ENCODE measurements at regions of chr11 and their contacts with region 1.

Region 1: DNA sequence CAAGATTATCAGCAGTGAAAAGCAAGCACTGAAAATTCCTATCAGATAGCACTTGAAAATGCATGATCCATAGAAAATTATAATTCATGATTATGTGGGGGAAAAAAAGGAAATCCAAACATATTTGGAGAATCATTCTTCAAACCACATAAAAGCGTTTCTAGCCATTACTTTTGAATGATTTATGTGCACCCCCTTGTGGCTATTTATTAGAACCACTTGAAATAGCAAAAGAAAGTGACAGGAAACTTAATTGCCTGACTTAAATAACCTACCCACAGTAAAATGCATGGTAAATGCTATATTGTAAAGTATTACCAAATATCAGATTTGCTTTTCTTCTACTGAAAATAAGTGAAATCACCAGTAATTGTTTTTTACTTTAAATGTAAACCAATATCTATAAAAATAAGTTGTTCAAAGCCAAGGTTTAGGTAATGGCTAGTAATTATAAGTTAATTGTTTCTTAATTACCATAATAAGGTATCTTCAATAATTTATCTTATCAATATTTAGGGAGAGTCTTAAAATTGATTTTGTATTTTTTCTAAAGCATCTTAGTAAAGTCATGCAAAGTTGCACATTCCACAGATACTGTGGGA is 168.5 kb downstream of the ARHGAP42 start:
- DNase-seq: peak in 2 of 5 donors; percentile 78 to 81
- H3K4me3 ChIP-seq: no peak overlapping the region
- H3K27ac ChIP-seq: no peak overlapping the region
- H3K4me1 ChIP-seq: peaks cover 0 to 3% (median 0%) of the 10 kb centered on the region in 3 donors
- H3K27me3 ChIP-seq: no peaks in the 10 kb centered on the region
- CTCF ChIP-seq: peak; percentile 43

Region 2: GRCh38 chr11:100691891-100692689 is 163.5 kb before region 1 on chr11:
- intact Hi-C with region 1: loop called (anchors 5 kb)
- DNase-seq: no peak
- H3K4me3 ChIP-seq: no peak overlapping the region
- H3K27ac ChIP-seq: no peak overlapping the region
- H3K4me1 ChIP-seq: peaks cover 0 to 2% (median 0%) of the 10 kb centered on the region in 3 donors
- H3K27me3 ChIP-seq: no peaks in the 10 kb centered on the region
- CTCF ChIP-seq: no peak

Region 3: GRCh38 chr11:100748153-100748552 is 107.4 kb before region 1 on chr11:
- intact Hi-C with region 1: no loop called
- DNase-seq: no peak
- H3K4me3 ChIP-seq: no peak overlapping the region
- H3K27ac ChIP-seq: no peak overlapping the region
- H3K4me1 ChIP-seq: peaks cover 0 to 5% (median 0%) of the 10 kb centered on the region in 3 donors
- H3K27me3 ChIP-seq: no peaks in the 10 kb centered on the region
- CTCF ChIP-seq: no peak

Region 4: GRCh38 chr11:100991541-100991940 is 136.0 kb after region 1 on chr11:
- intact Hi-C with region 1: no loop called
- DNase-seq: no peak
- H3K4me3 ChIP-seq: no peak overlapping the region
- H3K27ac ChIP-seq: no peak overlapping the region
- H3K4me1 ChIP-seq: no peaks in the 10 kb centered on the region
- H3K27me3 ChIP-seq: no peaks in the 10 kb centered on the region
- CTCF ChIP-seq: no peak

Measured in kidney (tissue), 22 donors.